ENCODE measurements at regions of chr1 and their contacts with region 1.

Region 1: GRCh38 chr1:24694380-24694843 is 50.8 kb upstream of the CLIC4 start:
- DNase-seq: peak; percentile 72
- ATAC-seq: peak; percentile 93

Region 2: DNA sequence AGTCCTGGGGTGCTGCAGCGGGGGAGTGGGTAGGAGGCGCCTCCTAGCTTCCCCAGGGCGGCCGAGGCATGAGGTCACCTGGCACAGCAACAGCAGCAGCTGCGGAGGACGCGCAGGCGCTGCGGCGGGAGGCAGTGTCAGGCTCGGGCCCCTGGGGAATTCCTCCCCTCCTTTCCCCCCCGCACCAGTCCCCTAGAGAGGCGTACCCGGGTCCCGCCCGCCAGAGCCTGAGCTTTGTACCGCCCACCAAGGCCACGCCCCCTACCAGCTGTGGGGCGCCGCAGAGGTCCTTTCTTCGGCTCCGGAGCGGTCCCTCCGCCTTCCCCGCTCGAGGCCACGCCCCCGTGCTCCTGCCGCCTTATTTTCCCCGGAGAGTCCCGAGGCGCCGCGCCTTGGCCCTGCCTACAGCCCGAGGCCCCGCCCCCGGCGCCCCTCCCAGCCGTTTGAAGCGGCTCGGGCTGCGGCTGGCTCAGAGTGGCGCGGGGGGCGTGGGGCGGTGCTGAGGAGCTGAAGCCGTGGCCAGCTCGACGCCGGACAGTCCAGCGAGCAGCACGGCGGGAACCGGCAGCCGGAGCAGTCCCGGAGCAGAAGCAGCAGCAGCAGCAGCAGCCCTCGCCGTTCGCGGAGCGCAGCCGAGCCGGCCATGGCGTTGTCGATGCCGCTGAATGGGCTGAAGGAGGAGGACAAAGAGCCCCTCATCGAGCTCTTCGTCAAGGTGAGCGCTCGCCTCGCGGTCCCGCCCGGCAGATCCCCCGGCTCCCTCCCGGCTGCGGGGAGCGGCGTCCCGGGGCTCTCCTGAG is 50.7 kb after region 1 on chr1 and contains the start of gene CLIC4:
- intact Hi-C with region 1: loop called (anchors 1 kb)
- DNase-seq: peak; percentile 100
- ATAC-seq: peak; percentile 96
- total RNA-seq, gene CLIC4: 406 TPM